ENCODE measurements at regions of chr2 and their contacts with region 1.

Region 1: GRCh38 chr2:113198790-113199612 is 25.2 kb downstream of the PSD4 start:
- DNase-seq: peak; percentile 61 to 90
- ATAC-seq: peak; percentile 81 to 90
- H3K4me3 ChIP-seq: peak overlapping the region; percentile 73
- H3K27ac ChIP-seq: peak overlapping the region; percentile 92 to 97
- H3K4me1 ChIP-seq: peaks cover 48% of the 10 kb centered on the region
- CTCF ChIP-seq: peak; percentile 96
- EP300 ChIP-seq: no peak
- POLR2A ChIP-seq: peak; percentile 62
- RAD21 ChIP-seq: peak; percentile 56 to 80; a peak in 4 of 5 replicates

Region 2: GRCh38 chr2:112529757-112530156 is 669.2 kb before region 1 on chr2:
- CTCF ChIA-PET with region 1: no interaction called
- POLR2A ChIA-PET with region 1: no interaction called
- DNase-seq: no peak
- ATAC-seq: no peak
- H3K4me3 ChIP-seq: no peak overlapping the region
- H3K27ac ChIP-seq: no peak overlapping the region
- H3K4me1 ChIP-seq: no peaks in the 10 kb centered on the region
- CTCF ChIP-seq: no peak
- EP300 ChIP-seq: no peak
- POLR2A ChIP-seq: no peak
- RAD21 ChIP-seq: no peak

Region 3: GRCh38 chr2:113167115-113167932 is 31.7 kb before region 1 on chr2:
- CTCF ChIA-PET with region 1: interaction called, 41 read pairs
- POLR2A ChIA-PET with region 1: interaction called, 3 read pairs
- DNase-seq: no peak
- ATAC-seq: peak; percentile 71 to 72; a peak in 5 of 6 replicates
- H3K4me3 ChIP-seq: no peak overlapping the region
- H3K27ac ChIP-seq: no peak overlapping the region
- H3K4me1 ChIP-seq: no peaks in the 10 kb centered on the region
- CTCF ChIP-seq: no peak
- EP300 ChIP-seq: no peak
- POLR2A ChIP-seq: no peak
- RAD21 ChIP-seq: no peak

Region 4: DNA sequence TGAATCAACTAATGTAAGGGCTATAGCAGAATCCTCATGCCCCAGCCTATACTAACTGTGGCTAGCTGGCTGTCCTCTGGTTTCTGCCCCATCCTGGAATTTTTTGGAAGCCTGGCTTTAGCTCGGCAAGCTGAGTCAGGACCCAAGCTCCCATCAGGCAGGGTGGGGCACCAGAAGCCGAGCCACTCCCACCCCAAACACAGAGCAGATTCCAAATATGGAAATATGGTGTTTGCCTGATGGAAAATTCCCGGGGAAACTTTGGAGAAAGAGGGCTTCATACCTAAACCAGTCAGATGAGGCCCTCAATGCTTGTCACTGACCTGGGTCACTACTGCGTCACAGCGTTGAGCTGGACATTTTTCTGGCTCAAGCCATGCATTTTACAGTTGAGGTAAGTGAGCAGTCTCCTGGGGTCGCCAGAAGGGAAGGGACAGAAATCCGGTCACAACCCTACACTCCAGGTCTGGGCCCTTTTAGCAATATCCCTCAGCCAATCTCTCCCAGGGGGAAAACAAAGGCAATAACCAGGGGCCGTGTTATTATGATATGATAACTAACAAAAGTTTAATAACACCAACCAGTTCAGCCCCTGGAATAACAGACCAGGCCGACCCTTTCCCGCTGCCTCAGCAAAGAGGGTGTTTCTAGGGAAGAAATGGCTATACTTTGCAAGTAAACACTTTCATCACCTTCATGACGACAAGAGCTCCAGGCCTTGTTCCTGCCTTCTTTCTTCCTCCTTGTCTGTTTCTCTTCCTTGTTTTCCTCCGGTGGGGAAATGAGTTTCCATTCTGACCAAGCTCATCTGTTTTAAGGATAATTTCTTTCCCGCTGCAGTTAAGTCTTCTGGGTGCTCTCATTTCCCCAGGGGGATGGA is 12.5 kb after region 1 on chr2:
- CTCF ChIA-PET with region 1: interaction called, 19 read pairs
- POLR2A ChIA-PET with region 1: interaction called, 4 read pairs
- DNase-seq: peak; percentile 77 to 95
- ATAC-seq: peak; percentile 80 to 86
- H3K4me3 ChIP-seq: peak overlapping the region; percentile 19; the same call in 2 of the 3 replicates
- H3K27ac ChIP-seq: peak overlapping the region; percentile 96
- H3K4me1 ChIP-seq: peaks cover 75% of the 10 kb centered on the region
- CTCF ChIP-seq: no peak
- EP300 ChIP-seq: peak; percentile 17 to 28; a peak in 1 of 5 replicates
- POLR2A ChIP-seq: no peak
- RAD21 ChIP-seq: 0 out of 5 replicates have a peak, but pooled peaks have one; percentile 2 to 15

Region 5: GRCh38 chr2:113233593-113234550 is 34.9 kb after region 1 on chr2:
- CTCF ChIA-PET with region 1: interaction called, 71 read pairs
- POLR2A ChIA-PET with region 1: no interaction called
- DNase-seq: peak; percentile 37 to 52
- ATAC-seq: peak; percentile 76 to 87
- H3K4me3 ChIP-seq: no peak overlapping the region
- H3K27ac ChIP-seq: peak overlapping the region; percentile 50 to 64
- H3K4me1 ChIP-seq: peaks cover 44% of the 10 kb centered on the region
- CTCF ChIP-seq: no peak
- EP300 ChIP-seq: no peak
- POLR2A ChIP-seq: no peak
- RAD21 ChIP-seq: no peak

Region 6: DNA sequence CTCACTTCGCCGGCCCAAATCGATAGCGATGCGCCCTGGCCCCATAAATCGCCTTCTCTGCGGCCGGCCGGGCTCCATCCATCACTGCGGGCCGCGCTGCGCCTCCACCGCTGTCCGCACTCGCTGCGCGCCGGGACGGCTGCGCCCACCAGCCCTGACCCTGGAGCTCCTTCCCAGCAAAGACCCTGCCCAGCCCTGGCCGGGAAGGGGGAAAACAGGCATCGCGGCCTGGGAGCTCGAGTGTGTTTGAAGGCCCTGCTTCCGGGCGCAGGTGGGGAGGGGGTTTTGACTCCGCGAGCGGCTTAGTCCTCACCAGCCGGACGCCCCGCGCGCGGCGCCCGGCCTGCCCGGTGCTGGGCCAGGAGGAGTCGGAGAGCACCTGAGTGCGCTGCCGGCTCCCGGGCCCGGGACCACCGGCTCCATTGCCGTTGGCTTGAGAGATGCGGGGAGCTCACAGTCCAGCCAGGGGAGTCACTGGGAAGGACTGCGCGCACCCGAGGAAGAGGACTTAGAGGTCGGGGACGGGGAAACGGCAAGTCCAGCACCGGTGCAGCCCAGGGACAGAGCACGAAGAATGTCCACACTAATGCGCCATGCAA is 78.6 kb after region 1 on chr2:
- CTCF ChIA-PET with region 1: interaction called, 16 read pairs
- POLR2A ChIA-PET with region 1: no interaction called
- DNase-seq: no peak
- ATAC-seq: no peak
- H3K4me3 ChIP-seq: no peak overlapping the region
- H3K27ac ChIP-seq: peak overlapping the region in 1 of 2 experiments; percentile 98; a peak in 2 of 6 replicates
- H3K4me1 ChIP-seq: peaks cover 50% of the 10 kb centered on the region
- CTCF ChIP-seq: no peak
- EP300 ChIP-seq: no peak
- POLR2A ChIP-seq: no peak
- RAD21 ChIP-seq: no peak

Region 7: DNA sequence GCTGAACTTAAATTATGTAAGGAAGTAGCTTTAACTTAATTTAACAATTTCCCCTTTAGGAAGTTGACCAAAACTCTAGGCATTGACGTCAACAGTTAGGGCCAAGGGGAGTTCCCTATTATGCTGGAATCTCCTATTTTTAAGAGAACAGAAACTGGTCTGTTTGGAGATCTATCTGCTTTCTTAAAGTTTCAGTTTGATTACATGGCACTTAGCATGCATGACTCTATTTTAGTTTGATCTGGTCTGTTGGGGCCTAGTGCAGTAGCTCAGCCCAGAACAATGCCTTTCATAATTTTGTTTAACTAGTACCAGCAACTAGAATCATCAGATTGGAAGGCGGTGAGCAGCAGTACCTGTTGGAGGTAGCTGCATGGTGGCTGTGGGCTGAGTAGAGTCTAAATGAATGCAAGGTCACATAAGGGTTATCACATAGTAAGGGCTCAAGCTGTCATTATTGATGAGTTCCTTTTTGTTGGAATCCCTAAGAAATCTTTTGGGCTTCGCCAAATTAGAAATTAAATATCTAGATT is 178.0 kb after region 1 on chr2:
- CTCF ChIA-PET with region 1: interaction called, 113 read pairs
- POLR2A ChIA-PET with region 1: interaction called, 4 read pairs
- DNase-seq: no peak
- ATAC-seq: no peak
- H3K4me3 ChIP-seq: no peak overlapping the region
- H3K27ac ChIP-seq: no peak overlapping the region
- H3K4me1 ChIP-seq: peaks cover 6% of the 10 kb centered on the region; the same call in 1 of the 3 replicates
- CTCF ChIP-seq: no peak
- EP300 ChIP-seq: no peak
- POLR2A ChIP-seq: no peak
- RAD21 ChIP-seq: no peak

Measured in A549 (cell line).